ENCODE measurements at regions of chr10 and their contacts with region 1.

Region 1: GRCh38 chr10:122648599-122649428 is 50.8 kb downstream of the C10orf120 start:
- DNase-seq: peak; percentile 50
- H3K4me3 ChIP-seq: no peak overlapping the region
- H3K27ac ChIP-seq: no peak overlapping the region
- H3K4me1 ChIP-seq: no peaks in the 10 kb centered on the region
- H3K27me3 ChIP-seq: peaks cover 3 to 9% of the 10 kb centered on the region in 2 experiments
- CTCF ChIP-seq: peak; percentile 72 to 75
- POLR2A ChIP-seq: no peak

Region 2: GRCh38 chr10:122688293-122688994 is 39.6 kb after region 1 on chr10:
- CTCF ChIA-PET with region 1: interaction called, 19 read pairs
- POLR2A ChIA-PET with region 1: no interaction called
- dilution Hi-C with region 1: no loop called
- intact Hi-C with region 1: no loop called
- DNase-seq: peak; percentile 32
- H3K4me3 ChIP-seq: no peak overlapping the region
- H3K27ac ChIP-seq: no peak overlapping the region
- H3K4me1 ChIP-seq: no peaks in the 10 kb centered on the region
- H3K27me3 ChIP-seq: no peaks in the 10 kb centered on the region
- CTCF ChIP-seq: no peak
- POLR2A ChIP-seq: no peak

Region 3: GRCh38 chr10:122703439-122704118 is 54.8 kb after region 1 on chr10:
- CTCF ChIA-PET with region 1: interaction called, 34 read pairs
- POLR2A ChIA-PET with region 1: no interaction called
- dilution Hi-C with region 1: no loop called
- intact Hi-C with region 1: loop called (anchors 1 kb)
- DNase-seq: peak; percentile 55
- H3K4me3 ChIP-seq: no peak overlapping the region
- H3K27ac ChIP-seq: no peak overlapping the region
- H3K4me1 ChIP-seq: no peaks in the 10 kb centered on the region
- H3K27me3 ChIP-seq: peaks cover 0 to 2% of the 10 kb centered on the region in 2 experiments
- CTCF ChIP-seq: peak; percentile 74 to 90
- POLR2A ChIP-seq: no peak